ENCODE measurements at regions of chr18 and their contacts with region 1.

Region 1: GRCh38 chr18:54776282-54776977 is 51.8 kb upstream of the RAB27B start:
- DNase-seq: peak; percentile 67
- ATAC-seq: peak; percentile 98
- H3K4me3 Mint-ChIP-seq: no peak overlapping the region
- H3K27ac Mint-ChIP-seq: no peak overlapping the region
- H3K4me1 Mint-ChIP-seq: peaks cover 17% of the 10 kb centered on the region
- H3K27me3 Mint-ChIP-seq: no peaks in the 10 kb centered on the region

Region 2: DNA sequence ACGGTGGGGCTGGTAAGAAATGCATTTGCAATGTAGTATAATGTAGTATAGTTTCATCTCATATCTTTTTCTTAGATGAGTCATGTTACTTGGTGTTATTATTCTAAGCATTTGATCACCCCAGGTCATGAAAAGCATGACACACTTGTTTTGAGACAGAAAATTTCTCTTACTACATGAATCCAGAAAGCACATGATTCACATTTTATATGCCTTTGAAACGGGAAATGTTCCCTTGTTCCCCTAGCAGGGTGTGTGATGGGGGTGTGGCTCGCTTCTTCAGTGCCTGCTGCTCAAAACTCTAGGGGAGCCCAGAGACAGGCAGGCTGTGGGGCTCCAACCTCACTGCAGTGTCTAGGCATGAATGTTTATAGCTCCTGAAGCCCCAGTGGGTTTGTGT is 64.1 kb before region 1 on chr18:
- CTCF ChIA-PET with region 1: no interaction called
- POLR2A ChIA-PET with region 1: no interaction called
- intact Hi-C with region 1: loop called in 1 of 2 experiments (anchors 1 kb)
- DNase-seq: peak; percentile 57
- ATAC-seq: peak; percentile 82
- H3K4me3 Mint-ChIP-seq: no peak overlapping the region
- H3K27ac Mint-ChIP-seq: no peak overlapping the region
- H3K4me1 Mint-ChIP-seq: peaks cover 35% of the 10 kb centered on the region
- H3K27me3 Mint-ChIP-seq: peaks cover 4% of the 10 kb centered on the region

Region 3: DNA sequence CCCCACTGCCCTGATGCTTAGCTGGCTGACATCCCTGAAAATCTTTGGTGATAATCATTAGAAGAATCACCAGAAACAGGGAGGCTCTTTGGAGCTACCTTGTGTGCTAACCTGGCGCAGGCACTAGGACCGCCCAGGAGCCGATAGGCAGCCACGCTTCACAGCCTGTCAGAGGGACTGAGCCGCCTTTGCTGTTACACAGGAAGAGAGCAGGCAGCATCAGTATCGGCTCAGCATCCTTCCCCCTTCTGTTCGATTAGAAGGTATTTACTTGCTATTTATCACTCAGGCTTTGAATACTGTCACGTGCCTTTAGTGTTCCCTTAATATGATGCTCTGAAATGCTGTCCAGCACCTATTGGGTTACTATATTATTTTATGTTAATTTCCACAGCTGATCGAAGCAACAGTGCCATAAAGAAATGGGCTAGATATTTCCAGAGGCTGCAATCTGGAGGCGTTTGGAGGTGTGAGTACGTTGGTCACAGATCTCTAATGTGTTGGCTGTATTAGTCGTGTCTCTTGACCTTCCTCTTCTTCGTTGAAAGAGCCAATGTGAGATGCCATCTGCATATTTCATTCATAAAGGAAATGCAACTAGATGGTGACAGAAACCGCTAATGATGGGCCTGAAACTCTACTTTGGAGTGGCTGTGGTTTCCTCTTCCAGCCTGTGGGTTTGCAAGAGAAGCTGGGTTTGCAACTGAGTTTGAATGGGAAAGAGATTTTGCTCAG is 58.6 kb before region 1 on chr18:
- CTCF ChIA-PET with region 1: interaction called, 3 read pairs
- POLR2A ChIA-PET with region 1: no interaction called
- intact Hi-C with region 1: loop called in 1 of 2 experiments (anchors 2 kb)
- DNase-seq: peak; percentile 74
- ATAC-seq: peak; percentile 91
- H3K4me3 Mint-ChIP-seq: peak overlapping the region; percentile 53
- H3K27ac Mint-ChIP-seq: peak overlapping the region; percentile 44
- H3K4me1 Mint-ChIP-seq: peaks cover 39% of the 10 kb centered on the region
- H3K27me3 Mint-ChIP-seq: peaks cover 6% of the 10 kb centered on the region

Region 4: DNA sequence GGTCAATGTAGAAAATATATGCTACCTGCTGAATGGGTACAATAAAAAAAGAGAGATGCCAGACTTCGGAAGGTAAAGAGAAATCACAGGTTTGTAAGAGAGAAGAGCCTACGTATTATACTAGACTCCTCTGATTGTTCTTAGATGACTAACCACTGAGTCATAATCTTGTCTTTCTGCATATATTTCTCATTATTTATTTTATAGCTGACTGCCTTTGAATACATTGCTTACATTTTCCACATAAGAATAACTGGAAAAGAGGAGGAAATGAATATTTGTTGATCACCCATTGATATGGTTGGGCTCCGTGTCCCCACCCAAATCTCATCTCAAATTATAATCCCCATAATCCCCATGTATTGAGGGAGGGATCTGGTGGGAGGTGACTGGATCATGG is 38.4 kb before region 1 on chr18:
- CTCF ChIA-PET with region 1: no interaction called
- POLR2A ChIA-PET with region 1: no interaction called
- intact Hi-C with region 1: loop called in 1 of 2 experiments (anchors 1 kb)
- DNase-seq: no peak
- ATAC-seq: peak; percentile 60
- H3K4me3 Mint-ChIP-seq: no peak overlapping the region
- H3K27ac Mint-ChIP-seq: no peak overlapping the region
- H3K4me1 Mint-ChIP-seq: peaks cover 17% of the 10 kb centered on the region
- H3K27me3 Mint-ChIP-seq: no peaks in the 10 kb centered on the region

Region 5: GRCh38 chr18:54828281-54828881 is 52.0 kb after region 1 on chr18 and contains the start of gene RAB27B:
- CTCF ChIA-PET with region 1: no interaction called
- POLR2A ChIA-PET with region 1: no interaction called
- intact Hi-C with region 1: loop called (anchors 2 to 5 kb)
- DNase-seq: peak; percentile 89
- ATAC-seq: peak; percentile 99
- H3K4me3 Mint-ChIP-seq: peak within 1 kb of the TSS; percentile 78
- H3K27ac Mint-ChIP-seq: peak within 1 kb of the TSS; percentile 55
- H3K4me1 Mint-ChIP-seq: peaks cover 20% of the 10 kb centered on the region
- H3K27me3 Mint-ChIP-seq: no peaks in the 10 kb centered on the region
- total RNA-seq, gene RAB27B: 0.35 to 0.53 TPM

Region 6: GRCh38 chr18:54852780-54853675 is 76.6 kb after region 1 on chr18:
- CTCF ChIA-PET with region 1: no interaction called
- POLR2A ChIA-PET with region 1: no interaction called
- intact Hi-C with region 1: loop called in 1 of 2 experiments (anchors 1 kb)
- DNase-seq: peak; percentile 29
- ATAC-seq: peak; percentile 80
- H3K4me3 Mint-ChIP-seq: peak overlapping the region; percentile 49
- H3K27ac Mint-ChIP-seq: peak overlapping the region; percentile 3
- H3K4me1 Mint-ChIP-seq: peaks cover 17% of the 10 kb centered on the region
- H3K27me3 Mint-ChIP-seq: no peaks in the 10 kb centered on the region